ENCODE measurements at regions of chr17 and their contacts with region 1.

Region 1: DNA sequence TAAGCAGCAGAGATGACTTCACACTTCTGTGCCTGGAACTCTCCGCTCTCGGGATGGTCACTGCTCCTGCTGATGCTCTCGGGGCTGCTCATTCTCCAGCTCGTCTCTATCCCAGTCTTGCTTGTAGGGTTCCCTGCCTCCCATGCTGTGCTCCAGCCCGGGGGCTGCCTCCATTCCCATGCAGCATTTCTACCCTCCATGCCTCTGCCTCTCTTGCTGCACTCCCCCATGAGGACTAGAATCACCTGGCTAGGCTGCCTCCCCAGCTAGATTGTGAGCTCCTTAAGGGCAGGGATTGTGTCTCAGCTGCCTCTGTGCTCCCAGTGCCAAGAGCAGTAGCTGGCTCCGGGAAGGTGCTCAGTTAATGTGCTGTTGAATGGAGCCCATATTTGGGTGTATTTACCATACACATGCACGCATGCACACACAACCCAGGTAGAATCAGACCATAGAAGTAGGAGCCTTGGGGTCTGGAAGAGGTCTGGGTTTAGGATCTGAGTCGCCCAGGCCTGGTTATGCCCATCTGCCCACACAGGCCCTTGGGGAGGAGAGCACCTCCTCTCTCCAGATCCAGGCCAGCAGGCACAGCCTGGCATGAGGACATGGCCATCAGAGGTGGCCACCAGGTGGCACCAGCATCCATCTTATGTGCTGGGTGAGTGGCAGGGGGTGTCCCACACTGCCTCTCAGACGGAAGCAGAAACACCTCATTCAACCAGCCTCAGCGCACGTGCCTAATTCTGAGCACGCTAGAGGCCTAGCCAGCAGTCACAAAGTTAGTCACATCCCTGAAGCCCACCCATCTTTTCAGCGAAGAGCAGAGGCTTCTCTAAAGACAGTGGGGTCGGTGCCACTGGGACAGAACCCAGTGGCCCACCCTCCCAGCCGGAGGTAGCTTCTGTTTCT is 9.3 kb downstream of the GIT1 start:
- DNase-seq: peak; percentile 79 to 90 (median 85)
- ATAC-seq: peak; percentile 59 to 80 (median 74)
- H3K4me3 ChIP-seq: no peak overlapping the region
- H3K27ac ChIP-seq: peak overlapping the region in 1 of 12 donors; percentile 5
- H3K4me1 ChIP-seq: peaks cover 0 to 43% (median 23%) of the 10 kb centered on the region in 12 donors
- H3K27me3 ChIP-seq: no peaks in the 10 kb centered on the region
- CTCF ChIP-seq: peak; percentile 80 to 95 (median 90)
- POLR2A ChIP-seq: no peak

Region 2: DNA sequence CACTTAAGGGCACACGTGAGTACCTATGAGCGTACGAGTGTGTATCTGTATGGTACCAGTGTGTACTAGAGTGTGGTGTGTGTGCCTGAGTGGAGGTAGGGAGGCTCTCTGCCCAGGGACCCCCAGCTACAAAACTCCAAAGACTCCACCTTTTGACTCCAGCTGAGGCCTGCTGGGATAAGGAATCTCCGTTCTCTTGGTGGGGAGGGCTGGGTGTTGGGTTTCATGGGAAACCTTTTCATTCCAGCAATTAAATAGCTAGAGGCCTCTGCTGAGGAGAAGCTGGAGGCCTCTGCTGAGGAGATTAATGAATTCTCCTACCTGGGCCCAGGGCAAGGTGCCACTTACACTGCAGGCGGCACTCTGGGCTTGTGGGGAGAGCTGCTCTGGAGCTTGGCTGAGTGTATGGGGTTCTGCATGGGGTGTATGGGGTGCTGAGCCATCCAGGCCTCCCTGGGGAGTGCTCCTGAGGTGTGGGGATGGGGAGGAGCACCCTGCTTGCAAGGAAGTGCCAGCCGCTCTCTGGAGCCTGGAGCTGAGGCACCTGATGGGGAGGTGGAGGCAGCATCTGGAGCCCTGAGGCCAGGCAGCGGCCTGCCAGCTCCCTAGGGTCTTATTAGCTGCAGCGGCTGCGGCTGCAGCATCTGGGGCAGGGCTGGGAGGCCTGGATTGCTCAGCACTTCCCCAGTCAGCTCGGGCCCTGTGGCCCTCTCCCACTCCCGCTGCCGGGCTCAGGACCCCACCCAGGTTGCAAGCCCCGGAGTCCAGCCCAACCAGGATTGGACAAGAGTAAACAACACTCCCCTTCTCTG is 17.4 kb after region 1 on chr17:
- intact Hi-C with region 1: no loop called
- DNase-seq: peak in 2 of 5 donors; percentile 25 to 29
- ATAC-seq: no peak
- H3K4me3 ChIP-seq: no peak overlapping the region
- H3K27ac ChIP-seq: peak overlapping the region in 2 of 12 donors; percentile 5 to 35
- H3K4me1 ChIP-seq: peaks cover 0 to 50% (median 24%) of the 10 kb centered on the region in 12 donors
- H3K27me3 ChIP-seq: no peaks in the 10 kb centered on the region
- CTCF ChIP-seq: no peak
- POLR2A ChIP-seq: no peak

Region 3: DNA sequence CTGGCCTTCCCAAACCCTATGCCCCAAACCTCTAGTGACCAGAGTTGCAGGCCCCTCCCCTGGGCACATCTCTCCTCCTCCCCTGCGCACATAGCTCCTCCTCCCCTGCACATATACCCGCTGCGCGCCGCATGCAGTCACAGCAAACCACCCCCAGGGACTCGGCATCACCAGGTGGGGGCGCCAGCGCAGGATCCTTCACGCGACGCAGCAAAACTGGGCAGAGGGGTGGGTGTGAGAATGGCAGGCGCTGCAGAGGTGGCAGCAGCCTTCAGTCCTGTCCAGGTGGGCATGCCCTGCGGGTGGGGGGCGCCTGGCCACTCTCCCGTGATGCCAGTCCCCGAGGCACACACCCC is 37.0 kb after region 1 on chr17:
- intact Hi-C with region 1: loop called in 3 of 10 experiments (anchors 5 kb)
- DNase-seq: peak in 4 of 5 donors; percentile 64 to 89 (median 71)
- ATAC-seq: no peak
- H3K4me3 ChIP-seq: peak overlapping the region in 9 of 12 donors; percentile 27 to 61 (median 43)
- H3K27ac ChIP-seq: no peak overlapping the region
- H3K4me1 ChIP-seq: peaks cover 6 to 93% (median 72%) of the 10 kb centered on the region in 12 donors
- H3K27me3 ChIP-seq: no peaks in the 10 kb centered on the region
- CTCF ChIP-seq: peak in 10 of 12 donors; percentile 17 to 56 (median 38)
- POLR2A ChIP-seq: no peak

Region 4: GRCh38 chr17:29645515-29646051 is 65.5 kb after region 1 on chr17:
- intact Hi-C with region 1: loop called in 1 of 10 experiments (anchors 10 kb)
- DNase-seq: peak in 4 of 5 donors; percentile 63 to 85 (median 72)
- ATAC-seq: peak; percentile 71 to 91 (median 81)
- H3K4me3 ChIP-seq: no peak overlapping the region
- H3K27ac ChIP-seq: peak overlapping the region; percentile 57 to 83 (median 74)
- H3K4me1 ChIP-seq: peaks cover 11 to 69% (median 59%) of the 10 kb centered on the region in 12 donors
- H3K27me3 ChIP-seq: no peaks in the 10 kb centered on the region
- CTCF ChIP-seq: no peak
- POLR2A ChIP-seq: no peak

Region 5: GRCh38 chr17:29782917-29783316 is 202.8 kb after region 1 on chr17:
- intact Hi-C with region 1: loop called in 3 of 10 experiments (anchors 5 kb)
- DNase-seq: no peak
- ATAC-seq: no peak
- H3K4me3 ChIP-seq: no peak overlapping the region
- H3K27ac ChIP-seq: no peak overlapping the region
- H3K4me1 ChIP-seq: peaks cover 0 to 29% (median 17%) of the 10 kb centered on the region in 12 donors
- H3K27me3 ChIP-seq: no peaks in the 10 kb centered on the region
- CTCF ChIP-seq: no peak
- POLR2A ChIP-seq: no peak

Region 6: GRCh38 chr17:30093463-30094147 is 513.5 kb after region 1 on chr17:
- intact Hi-C with region 1: loop called in 3 of 10 experiments (anchors 10 kb)
- DNase-seq: peak in 2 of 5 donors; percentile 23 to 29
- ATAC-seq: peak; percentile 40 to 72 (median 68)
- H3K4me3 ChIP-seq: no peak overlapping the region
- H3K27ac ChIP-seq: no peak overlapping the region
- H3K4me1 ChIP-seq: peaks cover 0 to 15% (median 4%) of the 10 kb centered on the region in 12 donors
- H3K27me3 ChIP-seq: no peaks in the 10 kb centered on the region
- CTCF ChIP-seq: peak; percentile 73 to 92 (median 83)
- POLR2A ChIP-seq: no peak